Common myeloid progenitor, CD34-positive (primary cell): ENCODE measurements at regions of chr10 and their contacts with region 1.

Region 1: GRCh38 chr10:71805776-71806703 is 32.7 kb upstream of the VSIR start:
- DNase-seq: peak; percentile 25 to 60 (median 59)
- H3K4me3 ChIP-seq: no peak overlapping the region
- H3K27ac ChIP-seq: no peak overlapping the region
- H3K4me1 ChIP-seq: peaks cover 5 to 57% (median 39%) of the 10 kb centered on the region in 4 experiments
- H3K27me3 ChIP-seq: no peaks in the 10 kb centered on the region

Region 2: DNA sequence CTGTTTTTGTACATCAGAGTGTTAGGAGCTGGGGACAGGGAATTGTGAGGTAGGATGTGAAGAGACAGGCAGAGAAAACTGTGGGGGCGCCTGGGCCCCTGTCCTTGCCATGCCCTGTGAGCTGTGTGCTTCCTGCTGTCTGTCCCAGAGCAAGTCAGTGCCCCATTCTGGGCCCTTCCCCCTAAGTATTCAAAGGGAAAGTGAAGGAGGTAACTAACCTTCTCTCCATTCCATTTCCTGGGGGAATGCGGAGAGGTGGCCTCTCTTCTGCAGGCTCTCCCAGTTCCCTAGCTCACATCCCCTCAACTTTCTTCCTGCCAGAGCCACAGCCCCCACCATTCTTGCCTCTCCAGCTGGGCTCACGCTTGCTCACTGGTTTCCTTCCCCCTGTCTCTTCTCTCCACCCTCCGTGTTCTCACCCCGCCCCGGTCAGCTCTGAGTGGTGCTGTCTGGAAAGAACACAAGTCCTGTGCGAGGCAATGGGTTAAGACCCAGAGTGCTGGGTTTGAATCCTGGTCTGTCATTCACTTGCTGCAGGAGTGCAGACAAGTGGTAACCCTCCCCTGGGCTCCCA is 23.0 kb before region 1 on chr10:
- CTCF ChIA-PET with region 1: interaction called, 133 read pairs
- POLR2A ChIA-PET with region 1: no interaction called
- DNase-seq: peak; percentile 14 to 49 (median 47)
- H3K4me3 ChIP-seq: peak overlapping the region in 2 of 7 experiments; percentile 0 to 40
- H3K27ac ChIP-seq: no peak overlapping the region
- H3K4me1 ChIP-seq: peaks cover 2 to 56% (median 29%) of the 10 kb centered on the region in 4 experiments
- H3K27me3 ChIP-seq: no peaks in the 10 kb centered on the region